ENCODE measurements at regions of chr5 and their contacts with region 1.

Region 1: GRCh38 chr5:90783460-90784333 is 225.1 kb downstream of the ADGRV1 start:
- DNase-seq: peak; percentile 70
- H3K4me3 Mint-ChIP-seq: no peak overlapping the region
- H3K27ac Mint-ChIP-seq: no peak overlapping the region
- H3K4me1 Mint-ChIP-seq: no peaks in the 10 kb centered on the region
- H3K27me3 Mint-ChIP-seq: peaks cover 4% of the 10 kb centered on the region

Region 2: GRCh38 chr5:90529194-90529938 is 254.3 kb before region 1 on chr5 and contains the start of gene LYSMD3:
- CTCF ChIA-PET with region 1: no interaction called
- POLR2A ChIA-PET with region 1: no interaction called
- intact Hi-C with region 1: loop called (anchors 10 kb)
- DNase-seq: peak; percentile 97
- H3K4me3 Mint-ChIP-seq: peak within 1 kb of the TSS; percentile 100
- H3K27ac Mint-ChIP-seq: peak within 1 kb of the TSS; percentile 96
- H3K4me1 Mint-ChIP-seq: peaks cover 24% of the 10 kb centered on the region
- H3K27me3 Mint-ChIP-seq: peaks cover 10% of the 10 kb centered on the region
- total RNA-seq, gene LYSMD3: 12.6 to 13.0 TPM

Region 3: DNA sequence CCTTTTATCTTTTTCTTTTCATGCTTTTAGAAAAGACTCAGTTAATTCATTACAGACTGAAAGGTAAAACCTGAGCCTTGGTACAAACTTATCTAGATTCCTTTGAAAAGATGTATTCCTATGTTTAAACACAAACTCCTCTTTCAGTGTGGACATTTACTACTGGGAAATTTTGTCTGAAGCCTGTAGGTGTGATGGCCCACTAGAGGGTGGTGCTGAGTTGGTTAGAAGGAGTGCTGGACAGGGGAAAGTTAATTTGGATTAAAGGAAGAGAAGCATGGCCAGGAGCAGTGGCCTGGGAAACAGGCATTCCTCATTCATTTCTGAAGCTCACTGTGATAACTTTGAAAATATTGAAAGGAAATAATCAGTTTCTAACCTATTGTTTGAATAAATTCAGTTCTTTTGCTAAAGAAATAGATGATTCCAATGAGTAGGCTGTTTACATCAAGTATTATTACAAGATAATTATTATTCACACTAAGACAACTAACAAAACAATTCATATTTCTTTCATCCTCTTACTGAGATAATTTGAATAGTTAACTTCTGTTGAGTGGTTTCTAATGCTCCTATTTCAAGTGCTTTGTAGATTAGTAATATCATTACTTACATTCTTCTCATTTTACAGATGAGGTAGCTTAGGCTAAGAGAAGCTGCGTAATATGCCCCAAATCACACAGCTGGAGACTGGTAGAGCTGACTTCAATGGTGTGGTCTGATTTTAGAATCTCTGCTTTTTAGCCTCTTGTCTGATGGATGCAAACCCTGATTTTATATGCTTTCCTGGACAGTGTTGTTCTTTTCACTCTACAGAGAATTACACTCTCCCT is 74.2 kb before region 1 on chr5:
- CTCF ChIA-PET with region 1: interaction called, 10 read pairs
- POLR2A ChIA-PET with region 1: no interaction called
- intact Hi-C with region 1: loop called (anchors 1 kb)
- DNase-seq: peak; percentile 10
- H3K4me3 Mint-ChIP-seq: no peak overlapping the region
- H3K27ac Mint-ChIP-seq: no peak overlapping the region
- H3K4me1 Mint-ChIP-seq: no peaks in the 10 kb centered on the region
- H3K27me3 Mint-ChIP-seq: peaks cover 11% of the 10 kb centered on the region

Region 4: DNA sequence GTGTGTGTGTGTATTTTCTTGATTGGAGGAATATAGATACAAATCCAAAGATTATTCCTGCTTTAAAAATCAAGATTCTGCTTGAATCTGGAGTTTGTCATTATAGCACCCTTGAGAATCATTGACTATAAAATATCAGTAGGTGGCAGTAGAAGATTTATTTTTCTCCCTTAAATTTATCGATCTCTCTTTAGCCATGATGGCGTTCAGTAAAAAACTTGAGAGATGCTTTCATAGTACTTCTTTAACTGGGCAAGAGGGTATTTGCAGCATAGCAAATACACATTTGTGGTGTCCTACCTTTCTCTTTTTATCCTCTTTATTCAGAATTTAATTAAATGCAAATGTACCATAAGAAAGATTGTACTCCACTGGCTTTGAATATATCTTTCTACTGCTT is 82.6 kb after region 1 on chr5:
- CTCF ChIA-PET with region 1: no interaction called
- POLR2A ChIA-PET with region 1: no interaction called
- intact Hi-C with region 1: no loop called
- DNase-seq: no peak
- H3K4me3 Mint-ChIP-seq: no peak overlapping the region
- H3K27ac Mint-ChIP-seq: no peak overlapping the region
- H3K4me1 Mint-ChIP-seq: peaks cover 6% of the 10 kb centered on the region
- H3K27me3 Mint-ChIP-seq: peaks cover 14% of the 10 kb centered on the region

Region 5: DNA sequence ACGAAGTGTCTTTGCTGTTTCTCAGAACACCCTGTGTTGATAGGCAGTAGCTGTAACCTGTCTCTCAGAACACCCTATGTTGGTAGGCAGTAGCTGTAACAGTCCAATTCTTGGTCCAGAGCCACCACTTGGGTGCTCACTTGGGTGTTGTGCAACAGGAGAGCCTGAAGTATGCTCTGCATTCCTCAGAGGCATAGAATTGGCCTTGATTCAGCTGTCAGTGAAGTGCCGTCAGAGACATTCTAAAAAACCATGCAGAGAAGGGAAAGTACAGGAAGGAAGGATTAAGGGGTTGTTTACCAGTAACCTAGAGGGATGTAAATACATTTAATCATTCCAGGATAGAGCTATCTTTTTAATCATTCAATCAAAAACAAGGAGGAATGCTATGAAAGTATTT is 368.2 kb after region 1 on chr5:
- CTCF ChIA-PET with region 1: no interaction called
- POLR2A ChIA-PET with region 1: no interaction called
- intact Hi-C with region 1: no loop called
- DNase-seq: no peak
- H3K4me3 Mint-ChIP-seq: no peak overlapping the region
- H3K27ac Mint-ChIP-seq: no peak overlapping the region
- H3K4me1 Mint-ChIP-seq: no peaks in the 10 kb centered on the region
- H3K27me3 Mint-ChIP-seq: peaks cover 1% of the 10 kb centered on the region

Region 6: DNA sequence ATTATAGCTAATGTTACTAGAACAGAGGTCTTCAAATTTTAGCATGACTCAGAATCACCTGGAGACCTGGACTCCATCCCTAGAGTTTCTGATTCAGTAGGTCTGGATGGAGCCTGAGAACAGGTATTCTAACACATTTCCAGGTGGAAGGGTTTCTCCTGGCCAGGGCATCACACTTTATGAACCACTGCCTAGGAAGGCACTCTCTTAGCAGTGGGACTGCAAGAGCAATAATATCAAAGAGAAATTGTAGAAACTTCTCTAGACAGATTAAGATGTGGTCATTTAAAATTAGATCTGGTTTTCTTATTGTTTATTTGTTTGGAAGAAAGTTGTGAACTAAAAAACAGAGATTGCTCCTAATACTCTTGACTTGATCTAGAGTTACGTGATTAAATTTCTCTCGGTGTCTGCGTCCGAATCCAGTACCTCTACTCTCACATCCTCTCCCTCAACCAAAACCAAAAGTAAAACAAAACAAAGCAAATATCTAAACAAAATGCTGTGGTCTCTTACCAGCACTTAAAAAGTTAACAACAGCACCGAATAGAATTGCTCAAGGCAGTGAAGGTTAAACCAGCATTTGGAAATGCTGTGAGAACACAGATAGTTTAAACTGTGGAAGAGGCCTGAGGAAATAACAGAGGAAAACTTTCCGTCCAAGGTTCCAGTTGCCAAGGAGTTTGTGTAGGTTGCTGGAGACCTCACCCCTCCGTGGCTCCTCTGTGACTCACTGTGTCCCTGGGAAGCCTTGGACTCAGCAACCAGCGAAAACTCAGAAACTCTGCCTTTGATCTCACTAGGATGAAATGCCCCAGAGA is 406.0 kb after region 1 on chr5:
- CTCF ChIA-PET with region 1: no interaction called
- POLR2A ChIA-PET with region 1: no interaction called
- intact Hi-C with region 1: no loop called
- DNase-seq: no peak
- H3K4me3 Mint-ChIP-seq: no peak overlapping the region
- H3K27ac Mint-ChIP-seq: no peak overlapping the region
- H3K4me1 Mint-ChIP-seq: no peaks in the 10 kb centered on the region
- H3K27me3 Mint-ChIP-seq: peaks cover 19% of the 10 kb centered on the region

Region 7: GRCh38 chr5:91469517-91470165 is 685.9 kb after region 1 on chr5:
- CTCF ChIA-PET with region 1: no interaction called
- POLR2A ChIA-PET with region 1: no interaction called
- intact Hi-C with region 1: no loop called
- DNase-seq: no peak
- H3K4me3 Mint-ChIP-seq: no peak overlapping the region
- H3K27ac Mint-ChIP-seq: no peak overlapping the region
- H3K4me1 Mint-ChIP-seq: peaks cover 8% of the 10 kb centered on the region
- H3K27me3 Mint-ChIP-seq: no peaks in the 10 kb centered on the region

Measured in activated CD4-positive, alpha-beta memory T cell treated with anti-CD3 and anti-CD28 coated beads for 36 hours (primary cell).